HepG2 (cell line): ENCODE measurements at regions of chr14 and their contacts with region 1.

Region 1: GRCh38 chr14:30621940-30622830 is at the start of gene SCFD1:
- DNase-seq: peak; percentile 97
- ATAC-seq: peak; percentile 98
- H3K4me3 ChIP-seq: peak within 1 kb of the TSS; percentile 92 to 96 (median 94)
- H3K27ac ChIP-seq: peak within 1 kb of the TSS; percentile 87
- H3K4me1 ChIP-seq: peaks cover 43% of the 10 kb centered on the region
- H3K27me3 ChIP-seq: peaks cover 0 to 4% of the 10 kb centered on the region in 2 experiments; a peak in 2 of 5 replicates
- CTCF ChIP-seq: peak; percentile 13; the same call in 1 of the 2 replicates
- EP300 ChIP-seq: peak; percentile 45 to 79
- POLR2A ChIP-seq: peak; percentile 99
- RAD21 ChIP-seq: peak; percentile 85
- total RNA-seq, gene SCFD1: 256 and 318 TPM in 2 replicates

Region 2: DNA sequence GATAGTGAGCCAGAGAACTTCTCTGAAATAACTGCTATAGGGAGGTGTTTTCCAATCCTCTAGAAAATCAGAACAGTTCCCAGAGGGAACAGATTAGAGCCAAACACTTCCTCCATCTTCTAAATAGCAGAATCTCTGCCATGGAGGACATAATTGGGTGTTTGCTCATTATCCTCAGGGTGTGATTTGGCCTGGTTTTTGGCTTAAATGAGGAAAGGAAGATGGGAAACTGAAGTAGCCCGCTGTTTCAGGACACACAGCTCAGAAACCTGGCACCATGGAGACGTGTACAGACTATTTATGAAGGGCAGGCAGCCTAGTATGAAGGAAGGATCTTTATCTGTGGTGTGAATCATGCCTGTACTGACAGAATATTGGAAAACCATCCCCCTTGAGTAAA is 462.8 kb before region 1 on chr14:
- CTCF ChIA-PET with region 1: no interaction called
- POLR2A ChIA-PET with region 1: no interaction called
- in situ Hi-C with region 1: no loop called
- intact Hi-C with region 1: no loop called
- DNase-seq: no peak
- ATAC-seq: no peak
- H3K4me3 ChIP-seq: no peak overlapping the region
- H3K27ac ChIP-seq: no peak overlapping the region
- H3K4me1 ChIP-seq: no peaks in the 10 kb centered on the region
- H3K27me3 ChIP-seq: no peaks in the 10 kb centered on the region
- CTCF ChIP-seq: no peak
- EP300 ChIP-seq: no peak
- POLR2A ChIP-seq: no peak
- RAD21 ChIP-seq: no peak

Region 3: GRCh38 chr14:30462358-30462757 is 159.8 kb before region 1 on chr14:
- CTCF ChIA-PET with region 1: no interaction called
- POLR2A ChIA-PET with region 1: no interaction called
- in situ Hi-C with region 1: no loop called
- intact Hi-C with region 1: no loop called
- DNase-seq: no peak
- ATAC-seq: no peak
- H3K4me3 ChIP-seq: no peak overlapping the region
- H3K27ac ChIP-seq: no peak overlapping the region
- H3K4me1 ChIP-seq: no peaks in the 10 kb centered on the region
- H3K27me3 ChIP-seq: no peaks in the 10 kb centered on the region
- CTCF ChIP-seq: no peak
- EP300 ChIP-seq: no peak
- POLR2A ChIP-seq: no peak
- RAD21 ChIP-seq: no peak

Region 4: GRCh38 chr14:30610787-30611343 is 11.3 kb before region 1 on chr14:
- CTCF ChIA-PET with region 1: no interaction called
- POLR2A ChIA-PET with region 1: interaction called, 16 read pairs
- in situ Hi-C with region 1: no loop called
- intact Hi-C with region 1: no loop called
- DNase-seq: peak; percentile 75
- ATAC-seq: peak; percentile 75
- H3K4me3 ChIP-seq: no peak overlapping the region
- H3K27ac ChIP-seq: no peak overlapping the region
- H3K4me1 ChIP-seq: no peaks in the 10 kb centered on the region
- H3K27me3 ChIP-seq: no peaks in the 10 kb centered on the region
- CTCF ChIP-seq: peak; percentile 76
- EP300 ChIP-seq: 0 out of 4 replicates have a peak, but pooled peaks of 1 of the 2 experiments have one; percentile 5
- POLR2A ChIP-seq: no peak
- RAD21 ChIP-seq: no peak

Region 5: DNA sequence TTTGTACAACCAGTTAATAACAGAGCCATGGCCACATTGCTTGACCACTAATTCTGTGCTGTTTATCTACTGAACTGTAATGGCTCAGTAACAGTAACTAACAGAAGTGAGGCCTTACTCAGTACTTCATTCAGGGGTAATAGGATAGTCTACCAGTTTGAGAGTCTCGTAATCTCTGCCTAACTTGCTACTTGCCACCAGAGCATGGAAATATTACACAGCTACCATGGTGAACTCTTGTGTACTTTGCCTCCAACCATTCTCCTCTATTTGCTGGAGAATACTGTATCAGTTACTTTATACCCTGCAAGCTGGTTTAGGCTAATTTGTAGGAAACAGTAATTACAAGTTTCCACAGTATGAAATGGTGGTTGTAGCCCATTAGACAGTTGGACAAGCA is 10.5 kb after region 1 on chr14:
- CTCF ChIA-PET with region 1: no interaction called
- POLR2A ChIA-PET with region 1: interaction called, 17 read pairs
- in situ Hi-C with region 1: no loop called
- intact Hi-C with region 1: no loop called
- DNase-seq: no peak
- ATAC-seq: peak; percentile 51
- H3K4me3 ChIP-seq: no peak overlapping the region
- H3K27ac ChIP-seq: no peak overlapping the region
- H3K4me1 ChIP-seq: peaks cover 12% of the 10 kb centered on the region; the same call in 1 of the 2 replicates
- H3K27me3 ChIP-seq: no peaks in the 10 kb centered on the region
- CTCF ChIP-seq: no peak
- EP300 ChIP-seq: no peak
- POLR2A ChIP-seq: no peak
- RAD21 ChIP-seq: no peak

Region 6: DNA sequence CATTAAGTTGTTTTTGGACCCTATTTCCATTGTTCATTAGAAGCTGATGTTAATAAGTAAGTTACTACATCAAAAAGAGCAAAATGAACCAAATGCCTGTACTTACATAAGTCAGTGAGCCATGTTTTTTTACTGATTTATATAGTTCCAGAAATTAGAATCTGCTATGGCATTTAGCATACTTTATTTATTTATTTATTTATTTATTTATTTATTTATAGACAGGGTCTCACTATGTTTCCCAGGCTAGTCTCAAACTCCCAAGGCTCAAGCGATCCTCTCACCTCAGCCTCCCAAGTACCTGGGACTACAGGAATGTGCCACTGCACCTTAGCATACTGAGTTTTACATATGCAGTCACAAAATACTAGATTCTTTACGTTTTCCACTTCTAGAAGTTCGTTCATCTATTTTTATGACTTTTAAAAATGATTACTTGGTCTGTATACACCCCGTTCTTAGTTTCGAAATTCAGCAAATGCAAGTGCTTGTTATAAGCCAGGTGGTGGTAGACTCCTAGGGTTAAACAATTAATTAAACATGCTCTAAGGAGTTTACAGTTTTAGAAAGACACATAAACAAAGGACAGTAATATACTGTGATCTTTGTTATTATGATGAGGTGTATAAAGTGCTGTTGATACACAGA is 69.7 kb after region 1 on chr14:
- CTCF ChIA-PET with region 1: no interaction called
- POLR2A ChIA-PET with region 1: interaction called, 3 read pairs
- in situ Hi-C with region 1: no loop called
- intact Hi-C with region 1: loop called (anchors 5 kb)
- DNase-seq: no peak
- ATAC-seq: no peak
- H3K4me3 ChIP-seq: peak overlapping the region in 2 of 3 experiments; percentile 69 to 70; a peak in 3 of 6 replicates
- H3K27ac ChIP-seq: peak overlapping the region; percentile 74
- H3K4me1 ChIP-seq: peaks cover 21% of the 10 kb centered on the region
- H3K27me3 ChIP-seq: no peaks in the 10 kb centered on the region
- CTCF ChIP-seq: no peak
- EP300 ChIP-seq: no peak
- POLR2A ChIP-seq: no peak
- RAD21 ChIP-seq: no peak